ENCODE measurements at regions of chr3 and their contacts with region 1.

Region 1: GRCh38 chr3:127831723-127832172 is 9.4 kb upstream of the MGLL start:
- DNase-seq: peak; percentile 49 to 61
- ATAC-seq: peak in 5 of 8 donors; percentile 39 to 76 (median 70)
- H3K4me3 ChIP-seq: no peak overlapping the region
- H3K27ac ChIP-seq: no peak overlapping the region
- H3K4me1 ChIP-seq: no peaks in the 10 kb centered on the region
- H3K27me3 ChIP-seq: no peaks in the 10 kb centered on the region
- CTCF ChIP-seq: peak; percentile 61 to 84 (median 77)

Region 2: GRCh38 chr3:127590593-127591477 is 240.9 kb before region 1 on chr3 and contains the start of gene TPRA1:
- intact Hi-C with region 1: loop called in 2 of 10 experiments (anchors 10 kb)
- DNase-seq: peak; percentile 85 to 94
- ATAC-seq: peak; percentile 90 to 96 (median 94)
- H3K4me3 ChIP-seq: peak within 1 kb of the TSS; percentile 53 to 96 (median 92)
- H3K27ac ChIP-seq: peak within 1 kb of the TSS; percentile 81 to 95 (median 94)
- H3K4me1 ChIP-seq: peaks cover 19 to 55% (median 41%) of the 10 kb centered on the region in 9 donors
- H3K27me3 ChIP-seq: no peaks in the 10 kb centered on the region
- CTCF ChIP-seq: peak in 6 of 9 donors; percentile 16 to 58 (median 36)
- total RNA-seq, gene TPRA1: 11.0 to 24.2 (median 16.3) TPM

Region 3: GRCh38 chr3:127652231-127652995 is 179.3 kb before region 1 on chr3:
- intact Hi-C with region 1: loop called (anchors 1 to 5 kb)
- DNase-seq: peak in 1 of 2 donors; percentile 38
- ATAC-seq: peak; percentile 84 to 93 (median 89)
- H3K4me3 ChIP-seq: no peak overlapping the region
- H3K27ac ChIP-seq: no peak overlapping the region
- H3K4me1 ChIP-seq: peaks cover 0 to 12% (median 4%) of the 10 kb centered on the region in 9 donors
- H3K27me3 ChIP-seq: no peaks in the 10 kb centered on the region
- CTCF ChIP-seq: peak; percentile 79 to 97 (median 94)

Region 4: GRCh38 chr3:127820221-127820825 is 11.4 kb before region 1 on chr3:
- intact Hi-C with region 1: no loop called
- DNase-seq: no peak
- ATAC-seq: no peak
- H3K4me3 ChIP-seq: peak overlapping the region; percentile 15 to 92 (median 84)
- H3K27ac ChIP-seq: peak overlapping the region; percentile 74 to 98 (median 95)
- H3K4me1 ChIP-seq: peaks cover 18 to 68% (median 57%) of the 10 kb centered on the region in 9 donors
- H3K27me3 ChIP-seq: no peaks in the 10 kb centered on the region
- CTCF ChIP-seq: no peak

Region 5: GRCh38 chr3:127953091-127954035 is 121.6 kb after region 1 on chr3:
- intact Hi-C with region 1: no loop called
- DNase-seq: peak in 1 of 2 donors; percentile 43
- ATAC-seq: peak; percentile 54 to 89 (median 78)
- H3K4me3 ChIP-seq: no peak overlapping the region
- H3K27ac ChIP-seq: peak overlapping the region; percentile 46 to 94 (median 86)
- H3K4me1 ChIP-seq: peaks cover 2 to 65% (median 34%) of the 10 kb centered on the region in 9 donors
- H3K27me3 ChIP-seq: no peaks in the 10 kb centered on the region
- CTCF ChIP-seq: no peak

Region 6: DNA sequence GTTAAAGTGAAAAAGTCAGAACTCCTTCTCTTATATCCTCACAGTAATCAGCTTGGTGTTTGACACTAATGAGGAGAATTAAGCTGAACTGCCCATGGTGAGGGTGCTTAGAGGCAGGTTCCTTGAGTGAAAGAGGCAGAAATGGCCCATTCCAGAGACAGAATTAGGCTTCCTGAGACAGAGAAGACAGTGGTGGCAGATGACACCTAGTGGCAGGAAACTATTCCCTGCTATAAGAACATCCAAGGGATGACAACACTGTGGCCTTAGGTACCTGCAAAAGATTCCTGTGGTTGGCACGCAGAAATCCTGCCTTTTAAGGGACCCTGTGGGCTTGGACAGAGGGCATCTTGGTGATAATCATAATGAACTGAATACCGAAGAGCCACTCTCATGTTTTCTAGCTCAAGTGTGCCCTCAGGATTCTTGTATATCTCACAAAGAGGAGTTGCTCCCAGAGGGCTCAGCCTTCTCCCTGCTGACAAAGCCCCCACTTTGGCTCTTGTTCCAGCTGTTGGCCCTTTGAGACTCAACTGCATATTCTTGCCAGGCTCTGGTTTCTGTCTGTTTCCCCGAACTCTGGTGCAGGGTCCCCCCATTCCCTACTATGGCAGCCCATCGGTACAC is 139.3 kb after region 1 on chr3:
- intact Hi-C with region 1: loop called in 2 of 10 experiments (anchors 10 kb)
- DNase-seq: peak in 1 of 2 donors; percentile 28
- ATAC-seq: peak; percentile 69 to 87 (median 79)
- H3K4me3 ChIP-seq: no peak overlapping the region
- H3K27ac ChIP-seq: no peak overlapping the region
- H3K4me1 ChIP-seq: peaks cover 0 to 9% (median 0%) of the 10 kb centered on the region in 9 donors
- H3K27me3 ChIP-seq: no peaks in the 10 kb centered on the region
- CTCF ChIP-seq: peak; percentile 59 to 82 (median 70)